CD4-positive, alpha-beta T cell (primary cell): ENCODE measurements at regions of chr1 and their contacts with region 1.

Region 1: GRCh38 chr1:46718727-46719622 is at the start of gene EFCAB14:
- DNase-seq: peak; percentile 97 to 100 (median 99)
- ATAC-seq: peak; percentile 99
- H3K4me3 ChIP-seq: peak within 1 kb of the TSS; percentile 81
- H3K4me3 Mint-ChIP-seq: peak within 1 kb of the TSS; percentile 93
- H3K27ac ChIP-seq: peak within 1 kb of the TSS; percentile 66 to 67
- H3K27ac Mint-ChIP-seq: peak within 1 kb of the TSS; percentile 85
- H3K4me1 ChIP-seq: peaks cover 29% of the 10 kb centered on the region
- H3K4me1 Mint-ChIP-seq: peaks cover 51% of the 10 kb centered on the region
- H3K27me3 ChIP-seq: no peaks in the 10 kb centered on the region
- H3K27me3 Mint-ChIP-seq: no peaks in the 10 kb centered on the region
- CTCF ChIP-seq: no peak
- total RNA-seq, gene EFCAB14: 36.8 to 38.3 TPM

Region 2: DNA sequence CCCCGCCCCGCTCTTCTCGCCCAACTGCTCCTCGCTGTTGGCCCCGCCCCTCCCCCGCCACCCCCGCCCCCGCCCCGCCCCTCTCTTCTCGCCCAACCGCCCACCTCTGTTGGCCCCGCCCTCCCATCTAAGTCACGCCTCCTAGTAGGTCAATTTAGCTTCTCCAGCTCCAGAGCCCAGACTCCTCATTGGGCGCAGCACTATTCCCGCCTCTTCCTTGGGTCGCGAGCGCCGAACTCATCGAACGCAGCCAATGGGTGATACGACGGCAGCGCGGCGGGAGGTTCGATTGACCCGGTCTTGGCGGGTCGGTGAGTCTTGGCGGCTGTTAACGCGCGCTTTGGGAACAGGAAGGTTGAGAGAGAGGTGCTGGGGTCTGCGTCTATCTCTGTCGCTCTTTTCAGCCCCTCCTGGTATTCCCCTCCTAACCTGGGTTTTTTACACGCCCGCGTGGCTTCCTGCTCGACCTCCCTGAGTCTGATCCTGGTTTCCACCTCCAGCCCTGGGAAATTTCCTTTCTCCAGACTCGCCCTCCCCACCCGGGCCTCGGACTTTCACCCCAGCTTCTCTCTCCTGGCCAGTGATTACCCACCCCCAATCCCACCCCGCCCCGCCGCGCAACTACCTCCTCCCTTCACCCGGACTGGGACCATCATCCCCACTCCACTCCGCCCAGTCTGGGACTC is 471.4 kb before region 1 on chr1 and contains the start of gene RAD54L:
- CTCF ChIA-PET with region 1: no interaction called
- POLR2A ChIA-PET with region 1: no interaction called
- intact Hi-C with region 1: loop called in 1 of 2 experiments (anchors 5 kb)
- DNase-seq: peak; percentile 92 to 99 (median 94)
- ATAC-seq: peak; percentile 96
- H3K4me3 ChIP-seq: peak within 1 kb of the TSS; percentile 83
- H3K4me3 Mint-ChIP-seq: peak within 1 kb of the TSS; percentile 89
- H3K27ac ChIP-seq: no peak within 1 kb of the TSS
- H3K27ac Mint-ChIP-seq: peak within 1 kb of the TSS; percentile 36
- H3K4me1 ChIP-seq: peaks cover 21% of the 10 kb centered on the region
- H3K4me1 Mint-ChIP-seq: peaks cover 26% of the 10 kb centered on the region
- H3K27me3 ChIP-seq: no peaks in the 10 kb centered on the region
- H3K27me3 Mint-ChIP-seq: no peaks in the 10 kb centered on the region
- CTCF ChIP-seq: no peak
- total RNA-seq, gene RAD54L: 0.33 to 1.0 TPM

Region 3: GRCh38 chr1:46603858-46604549 is 115.0 kb before region 1 on chr1 and contains the start of gene MKNK1:
- CTCF ChIA-PET with region 1: interaction called, 3 read pairs
- POLR2A ChIA-PET with region 1: interaction called, 8 read pairs
- intact Hi-C with region 1: loop called (anchors 1 to 5 kb)
- DNase-seq: peak; percentile 97 to 100 (median 99)
- ATAC-seq: peak; percentile 98
- H3K4me3 ChIP-seq: peak within 1 kb of the TSS; percentile 98
- H3K4me3 Mint-ChIP-seq: peak within 1 kb of the TSS; percentile 93
- H3K27ac ChIP-seq: peak within 1 kb of the TSS; percentile 46 to 63
- H3K27ac Mint-ChIP-seq: peak within 1 kb of the TSS; percentile 86
- H3K4me1 ChIP-seq: peaks cover 49% of the 10 kb centered on the region
- H3K4me1 Mint-ChIP-seq: peaks cover 66% of the 10 kb centered on the region
- H3K27me3 ChIP-seq: no peaks in the 10 kb centered on the region
- H3K27me3 Mint-ChIP-seq: no peaks in the 10 kb centered on the region
- CTCF ChIP-seq: no peak
- total RNA-seq, gene MKNK1: 27.1 to 29.6 TPM

Region 4: DNA sequence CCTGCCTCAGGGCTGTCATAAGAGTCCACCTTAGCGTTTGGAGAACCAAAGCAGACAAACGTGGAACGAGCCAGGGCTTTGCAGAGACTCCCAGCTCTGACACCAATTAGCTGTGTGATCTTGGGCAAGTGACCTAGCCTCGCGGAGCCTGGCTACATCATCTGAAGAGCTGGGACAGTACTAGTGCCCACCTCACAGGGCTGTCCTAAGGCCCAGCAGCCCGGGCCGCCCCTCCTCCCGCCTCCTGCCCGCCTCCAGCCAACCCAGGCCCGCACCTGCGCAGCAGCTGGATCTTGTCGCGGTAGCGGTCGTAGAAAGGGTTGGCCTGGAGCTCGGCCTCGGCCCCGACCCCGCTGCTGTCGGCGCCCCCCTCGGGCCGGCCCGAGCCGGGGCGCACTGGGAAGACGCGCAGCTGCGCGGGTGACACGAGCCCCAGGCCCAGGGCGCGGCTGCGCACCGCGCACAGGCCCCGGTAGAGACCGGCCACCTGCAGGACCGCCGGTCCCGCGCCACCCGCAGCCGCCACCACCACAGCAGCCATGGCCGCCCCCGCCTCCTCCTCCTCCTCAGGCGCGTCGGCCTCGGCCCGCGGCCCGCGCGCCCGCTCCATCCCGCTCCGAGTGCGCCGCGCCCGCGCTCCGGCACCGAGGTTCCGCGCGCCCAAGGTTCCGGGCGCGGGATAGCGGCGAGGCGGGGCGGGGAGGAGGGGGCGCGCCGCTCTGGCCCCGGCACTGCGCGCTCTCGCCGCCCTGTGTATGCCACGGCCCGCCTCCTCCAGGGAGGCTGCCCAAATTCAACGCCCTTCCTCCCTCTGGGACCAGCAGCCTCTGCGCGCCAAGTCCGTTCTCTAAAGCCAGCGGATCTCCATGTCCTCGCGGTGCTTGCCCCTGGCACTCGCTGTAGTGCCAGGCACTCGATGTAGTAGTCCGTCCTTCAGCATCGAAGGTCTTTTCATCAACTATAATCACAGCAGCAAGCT is 50.9 kb before region 1 on chr1 and contains the start of gene ATPAF1:
- CTCF ChIA-PET with region 1: interaction called, 3 read pairs
- POLR2A ChIA-PET with region 1: interaction called, 8 read pairs
- intact Hi-C with region 1: loop called (anchors 1 to 5 kb)
- DNase-seq: peak; percentile 31 to 83 (median 54)
- ATAC-seq: peak; percentile 87
- H3K4me3 ChIP-seq: peak within 1 kb of the TSS; percentile 81
- H3K4me3 Mint-ChIP-seq: peak within 1 kb of the TSS; percentile 87
- H3K27ac ChIP-seq: peak within 1 kb of the TSS; percentile 7 to 68
- H3K27ac Mint-ChIP-seq: peak within 1 kb of the TSS; percentile 69
- H3K4me1 ChIP-seq: peaks cover 22% of the 10 kb centered on the region
- H3K4me1 Mint-ChIP-seq: peaks cover 16% of the 10 kb centered on the region
- H3K27me3 ChIP-seq: no peaks in the 10 kb centered on the region
- H3K27me3 Mint-ChIP-seq: no peaks in the 10 kb centered on the region
- CTCF ChIP-seq: no peak
- total RNA-seq, gene ATPAF1: 10.1 to 12.4 TPM

Region 5: GRCh38 chr1:46806271-46807020 is 87.5 kb after region 1 on chr1:
- CTCF ChIA-PET with region 1: no interaction called
- POLR2A ChIA-PET with region 1: no interaction called
- intact Hi-C with region 1: no loop called
- DNase-seq: no peak
- ATAC-seq: no peak
- H3K4me3 ChIP-seq: no peak overlapping the region
- H3K4me3 Mint-ChIP-seq: no peak overlapping the region
- H3K27ac ChIP-seq: no peak overlapping the region
- H3K27ac Mint-ChIP-seq: no peak overlapping the region
- H3K4me1 ChIP-seq: no peaks in the 10 kb centered on the region
- H3K4me1 Mint-ChIP-seq: no peaks in the 10 kb centered on the region
- H3K27me3 ChIP-seq: peaks cover 5 to 10% of the 10 kb centered on the region in 2 experiments
- H3K27me3 Mint-ChIP-seq: peaks cover 14% of the 10 kb centered on the region
- CTCF ChIP-seq: no peak

Region 6: DNA sequence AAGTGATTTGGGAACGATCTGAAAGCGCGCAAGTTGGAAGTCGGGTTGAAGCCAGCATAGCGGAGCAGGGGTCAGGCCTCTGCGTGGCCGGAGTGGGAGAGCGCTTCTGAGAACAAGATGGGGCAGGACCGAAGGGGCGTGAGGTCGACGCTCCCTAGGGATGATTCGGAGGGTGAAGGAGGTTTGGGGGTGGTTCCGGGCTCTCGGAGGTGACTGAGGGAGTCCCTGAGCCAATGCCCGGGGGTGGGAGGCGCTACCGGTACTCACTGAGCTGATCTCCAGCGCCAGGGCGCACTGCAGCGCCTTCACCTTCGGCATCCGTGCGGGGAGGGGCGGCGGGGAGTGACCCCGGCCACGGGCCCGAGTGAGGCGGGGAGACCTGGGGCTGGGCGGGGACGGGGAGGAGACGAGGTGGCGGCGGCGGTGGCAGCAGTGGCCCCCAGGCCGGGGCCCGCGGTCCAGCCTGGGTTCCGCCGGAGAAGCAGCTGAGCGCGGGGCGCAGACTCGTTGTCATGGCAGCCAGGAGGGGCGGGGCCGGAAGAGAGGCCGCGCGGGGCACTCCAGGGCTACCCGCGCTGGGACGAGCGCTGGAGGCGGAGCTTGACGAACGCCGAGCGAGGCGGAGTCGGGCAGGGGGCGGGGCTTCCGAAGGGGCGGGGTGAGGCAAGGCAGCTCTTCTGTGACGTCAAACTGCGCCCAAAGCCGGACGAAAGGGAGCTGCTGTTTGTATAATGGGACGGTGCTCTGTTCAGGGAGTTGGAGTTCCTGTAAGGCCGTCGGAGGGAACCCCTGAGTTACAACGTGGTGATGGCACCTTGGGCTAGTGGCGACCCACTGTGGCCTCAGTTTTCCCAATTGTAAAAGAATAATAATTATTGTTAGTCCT is 1753.0 kb after region 1 on chr1 and contains the start of gene SPATA6:
- CTCF ChIA-PET with region 1: no interaction called
- POLR2A ChIA-PET with region 1: no interaction called
- intact Hi-C with region 1: loop called in 1 of 2 experiments (anchors 10 kb)
- DNase-seq: peak; percentile 88 to 97 (median 94)
- ATAC-seq: peak; percentile 94
- H3K4me3 ChIP-seq: peak within 1 kb of the TSS; percentile 69
- H3K4me3 Mint-ChIP-seq: peak within 1 kb of the TSS; percentile 94
- H3K27ac ChIP-seq: peak within 1 kb of the TSS; percentile 31 to 46
- H3K27ac Mint-ChIP-seq: peak within 1 kb of the TSS; percentile 57
- H3K4me1 ChIP-seq: peaks cover 22% of the 10 kb centered on the region
- H3K4me1 Mint-ChIP-seq: peaks cover 45% of the 10 kb centered on the region
- H3K27me3 ChIP-seq: peaks cover 0 to 4% of the 10 kb centered on the region in 2 experiments
- H3K27me3 Mint-ChIP-seq: no peaks in the 10 kb centered on the region
- CTCF ChIP-seq: no peak
- total RNA-seq, gene SPATA6: 3.2 to 4.1 TPM